PC-9 (cell line): ENCODE measurements at regions of chr14 and their contacts with region 1.

Region 1: GRCh38 chr14:71309753-71310152 is 402.5 kb downstream of the PCNX1 start:
- DNase-seq: no peak
- H3K4me3 ChIP-seq: no peak overlapping the region
- H3K27ac ChIP-seq: no peak overlapping the region
- H3K4me1 ChIP-seq: no peaks in the 10 kb centered on the region
- H3K27me3 ChIP-seq: no peaks in the 10 kb centered on the region
- CTCF ChIP-seq: peak; percentile 26; the same call in 1 of the 2 replicates

Region 2: GRCh38 chr14:71248204-71248603 is 61.5 kb before region 1 on chr14:
- CTCF ChIA-PET with region 1: interaction called, 13 read pairs
- POLR2A ChIA-PET with region 1: no interaction called
- intact Hi-C with region 1: no loop called
- DNase-seq: peak in 1 of 2 experiments; percentile 97
- H3K4me3 ChIP-seq: peak overlapping the region; percentile 7; the same call in 1 of the 2 replicates
- H3K27ac ChIP-seq: peak overlapping the region; percentile 87
- H3K4me1 ChIP-seq: peaks cover 48% of the 10 kb centered on the region
- H3K27me3 ChIP-seq: no peaks in the 10 kb centered on the region
- CTCF ChIP-seq: no peak

Region 3: GRCh38 chr14:71362920-71363584 is 53.3 kb after region 1 on chr14:
- CTCF ChIA-PET with region 1: no interaction called
- POLR2A ChIA-PET with region 1: no interaction called
- intact Hi-C with region 1: no loop called
- DNase-seq: no peak
- H3K4me3 ChIP-seq: no peak overlapping the region
- H3K27ac ChIP-seq: no peak overlapping the region
- H3K4me1 ChIP-seq: peaks cover 14% of the 10 kb centered on the region; the same call in 1 of the 2 replicates
- H3K27me3 ChIP-seq: no peaks in the 10 kb centered on the region
- CTCF ChIP-seq: no peak

Region 4: GRCh38 chr14:71380271-71380670 is 70.5 kb after region 1 on chr14:
- CTCF ChIA-PET with region 1: no interaction called
- POLR2A ChIA-PET with region 1: interaction called, 20 read pairs
- intact Hi-C with region 1: no loop called
- DNase-seq: peak in 1 of 2 experiments; percentile 55
- H3K4me3 ChIP-seq: no peak overlapping the region
- H3K27ac ChIP-seq: no peak overlapping the region
- H3K4me1 ChIP-seq: no peaks in the 10 kb centered on the region; the same call in 1 of the 2 replicates
- H3K27me3 ChIP-seq: no peaks in the 10 kb centered on the region
- CTCF ChIP-seq: no peak